ENCODE measurements at regions of chr14 and their contacts with region 1.

Region 1: GRCh38 chr14:74762917-74763802 is at the start of gene YLPM1:
- DNase-seq: peak; percentile 89 to 92
- ATAC-seq: peak; percentile 100
- H3K4me3 ChIP-seq: peak within 1 kb of the TSS; percentile 78 to 99 (median 88)
- H3K27ac ChIP-seq: peak within 1 kb of the TSS; percentile 88 to 94 (median 90)
- H3K4me1 ChIP-seq: peaks cover 40 to 45% of the 10 kb centered on the region in 2 donors
- H3K27me3 ChIP-seq: no peaks in the 10 kb centered on the region
- CTCF ChIP-seq: peak in 3 of 5 experiments; percentile 28 to 44 (median 29)
- POLR2A ChIP-seq: peak; percentile 80 to 89
- total RNA-seq, gene YLPM1: 22.2 to 29.2 (median 25.8) TPM

Region 2: DNA sequence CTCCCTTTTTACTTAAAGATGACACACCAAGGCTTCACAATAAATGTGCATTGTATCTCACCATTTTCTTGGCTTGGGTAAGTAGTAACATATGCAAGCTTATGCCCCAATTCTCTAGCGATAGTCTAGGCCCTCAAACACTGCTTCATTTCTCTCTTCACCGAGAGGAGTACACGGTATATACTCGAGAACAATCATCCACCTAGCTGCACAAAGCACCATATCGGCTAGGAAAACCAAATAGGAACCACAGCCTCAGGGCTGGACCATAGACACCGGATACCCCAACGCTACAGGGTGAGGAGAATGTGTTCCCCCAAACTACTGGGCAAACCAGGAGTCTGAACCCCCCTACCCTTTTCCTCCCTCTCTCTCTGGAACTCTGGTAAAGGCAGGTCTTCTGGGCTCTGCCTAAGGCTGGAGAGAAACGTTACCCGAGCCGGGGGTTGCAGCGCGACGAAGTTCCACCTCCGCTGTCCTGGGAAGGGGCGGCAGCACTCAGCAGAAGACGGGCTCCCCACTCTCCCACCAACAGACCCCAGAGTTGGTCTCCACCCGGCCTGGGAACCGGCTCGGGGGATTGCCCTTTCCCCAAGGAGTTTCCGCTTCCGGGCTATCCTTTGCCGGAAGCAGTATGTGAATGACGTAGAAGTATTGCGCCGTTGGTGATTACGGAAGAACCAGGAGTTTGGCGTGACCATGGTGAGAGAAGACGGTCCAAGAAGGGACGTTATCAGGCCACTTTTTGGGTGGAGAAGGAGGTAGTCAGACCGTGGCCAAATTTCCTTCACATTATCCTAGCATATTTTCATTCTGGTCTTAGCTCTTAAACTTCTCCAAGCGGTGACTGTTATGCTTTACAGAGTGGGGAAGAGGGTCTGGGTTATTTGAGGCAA is 50.4 kb before region 1 on chr14 and contains the starts of genes AREL1 and FCF1:
- in situ Hi-C with region 1: no loop called
- intact Hi-C with region 1: loop called (anchors 2 kb)
- DNase-seq: peak; percentile 79 to 82
- ATAC-seq: peak; percentile 100
- H3K4me3 ChIP-seq: peak within 1 kb of the TSS; percentile 75 to 97 (median 82)
- H3K27ac ChIP-seq: peak within 1 kb of the TSS; percentile 80 to 91 (median 87)
- H3K4me1 ChIP-seq: peaks cover 19 to 23% of the 10 kb centered on the region in 2 donors
- H3K27me3 ChIP-seq: no peaks in the 10 kb centered on the region
- CTCF ChIP-seq: no peak
- POLR2A ChIP-seq: peak; percentile 83 to 84
- total RNA-seq, gene AREL1: 14.7 to 30.1 (median 22.1) TPM
- total RNA-seq, gene FCF1: 15.1 to 22.9 (median 18.6) TPM

Measured in gastrocnemius medialis (tissue), 4 donors.